ENCODE measurements at regions of chr10 and their contacts with region 1.

Region 1: DNA sequence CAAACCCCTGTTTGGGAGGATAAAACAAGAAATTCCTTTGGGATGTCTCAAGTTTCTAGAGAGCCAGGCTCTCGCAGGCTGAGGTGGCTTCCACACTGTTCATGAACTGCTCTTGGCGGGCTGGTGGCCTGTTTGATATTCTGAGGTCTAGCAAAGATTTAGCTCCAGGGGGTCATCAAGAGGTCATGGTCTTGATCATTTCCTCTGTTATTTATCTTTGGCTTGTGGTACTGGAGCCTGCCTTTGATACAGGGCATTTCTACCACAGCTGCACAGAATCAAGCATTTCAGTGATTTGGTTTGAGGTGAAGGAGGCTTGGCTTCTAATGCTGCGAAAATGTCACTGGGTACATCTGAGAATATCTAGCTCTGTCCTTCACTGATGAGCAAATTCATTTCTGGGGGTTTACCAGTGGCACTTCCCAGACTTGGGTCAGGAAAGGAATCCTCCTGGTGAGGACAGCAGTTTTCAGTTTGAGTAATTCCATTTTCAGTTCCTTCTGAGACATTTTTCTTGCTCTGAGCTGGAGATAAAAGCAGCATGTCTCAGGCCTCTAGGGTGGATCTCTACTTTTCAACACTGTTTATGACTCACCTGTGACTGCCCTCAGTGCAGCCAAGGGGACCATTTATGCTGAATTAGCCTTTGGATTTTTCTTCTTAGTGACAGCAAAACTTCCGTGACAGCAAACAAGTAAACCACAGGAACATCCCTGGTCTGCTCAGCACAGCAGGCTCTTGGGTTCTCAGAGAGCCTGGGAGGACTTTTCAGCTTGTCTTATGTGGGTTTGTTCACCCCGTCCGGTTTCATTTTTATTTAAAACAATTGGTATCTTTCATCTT is 312.0 kb downstream of the RNLS start:
- DNase-seq: peak; percentile 43
- H3K4me3 Mint-ChIP-seq: no peak overlapping the region
- H3K27ac Mint-ChIP-seq: peak overlapping the region; percentile 4
- H3K4me1 Mint-ChIP-seq: peaks cover 30% of the 10 kb centered on the region
- H3K27me3 Mint-ChIP-seq: peaks cover 3% of the 10 kb centered on the region

Region 2: GRCh38 chr10:87761892-87762291 is 509.2 kb before region 1 on chr10:
- CTCF ChIA-PET with region 1: no interaction called
- intact Hi-C with region 1: loop called (anchors 5 kb)
- DNase-seq: peak; percentile 77
- H3K4me3 Mint-ChIP-seq: no peak overlapping the region
- H3K27ac Mint-ChIP-seq: peak overlapping the region; percentile 86
- H3K4me1 Mint-ChIP-seq: peaks cover 37% of the 10 kb centered on the region
- H3K27me3 Mint-ChIP-seq: no peaks in the 10 kb centered on the region

Region 3: GRCh38 chr10:88052779-88053178 is 218.3 kb before region 1 on chr10:
- CTCF ChIA-PET with region 1: no interaction called
- intact Hi-C with region 1: no loop called
- DNase-seq: no peak
- H3K4me3 Mint-ChIP-seq: no peak overlapping the region
- H3K27ac Mint-ChIP-seq: no peak overlapping the region
- H3K4me1 Mint-ChIP-seq: no peaks in the 10 kb centered on the region
- H3K27me3 Mint-ChIP-seq: no peaks in the 10 kb centered on the region

Region 4: GRCh38 chr10:88064608-88065382 is 206.3 kb before region 1 on chr10:
- CTCF ChIA-PET with region 1: no interaction called
- intact Hi-C with region 1: loop called (anchors 1 kb)
- DNase-seq: peak; percentile 34
- H3K4me3 Mint-ChIP-seq: no peak overlapping the region
- H3K27ac Mint-ChIP-seq: no peak overlapping the region
- H3K4me1 Mint-ChIP-seq: peaks cover 68% of the 10 kb centered on the region
- H3K27me3 Mint-ChIP-seq: peaks cover 11% of the 10 kb centered on the region

Region 5: GRCh38 chr10:88138319-88138848 is 132.7 kb before region 1 on chr10:
- CTCF ChIA-PET with region 1: no interaction called
- intact Hi-C with region 1: loop called (anchors 1 kb)
- DNase-seq: no peak
- H3K4me3 Mint-ChIP-seq: no peak overlapping the region
- H3K27ac Mint-ChIP-seq: no peak overlapping the region
- H3K4me1 Mint-ChIP-seq: peaks cover 9% of the 10 kb centered on the region
- H3K27me3 Mint-ChIP-seq: no peaks in the 10 kb centered on the region

Region 6: DNA sequence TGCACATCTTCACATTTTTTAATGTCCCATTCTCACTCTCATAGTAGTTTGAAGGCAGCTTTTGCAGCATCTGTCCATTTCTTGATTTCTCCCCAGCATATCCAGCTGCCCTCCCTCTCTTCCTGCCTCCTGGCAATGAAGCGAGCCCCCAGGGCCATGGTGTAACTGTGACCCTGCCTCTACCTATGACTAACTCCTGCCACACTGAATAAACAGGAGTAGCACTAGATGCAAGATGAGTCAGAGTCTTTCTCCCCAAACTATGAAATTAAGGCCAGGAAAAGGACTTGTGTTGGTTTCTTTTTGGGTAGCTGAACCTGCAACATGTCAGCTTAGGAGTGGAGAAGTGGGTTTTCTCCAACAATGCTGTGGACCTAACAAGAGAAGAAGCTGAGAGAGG is 17.0 kb before region 1 on chr10:
- CTCF ChIA-PET with region 1: no interaction called
- intact Hi-C with region 1: loop called (anchors 1 kb)
- DNase-seq: peak; percentile 18
- H3K4me3 Mint-ChIP-seq: no peak overlapping the region
- H3K27ac Mint-ChIP-seq: no peak overlapping the region
- H3K4me1 Mint-ChIP-seq: peaks cover 4% of the 10 kb centered on the region
- H3K27me3 Mint-ChIP-seq: no peaks in the 10 kb centered on the region

Region 7: DNA sequence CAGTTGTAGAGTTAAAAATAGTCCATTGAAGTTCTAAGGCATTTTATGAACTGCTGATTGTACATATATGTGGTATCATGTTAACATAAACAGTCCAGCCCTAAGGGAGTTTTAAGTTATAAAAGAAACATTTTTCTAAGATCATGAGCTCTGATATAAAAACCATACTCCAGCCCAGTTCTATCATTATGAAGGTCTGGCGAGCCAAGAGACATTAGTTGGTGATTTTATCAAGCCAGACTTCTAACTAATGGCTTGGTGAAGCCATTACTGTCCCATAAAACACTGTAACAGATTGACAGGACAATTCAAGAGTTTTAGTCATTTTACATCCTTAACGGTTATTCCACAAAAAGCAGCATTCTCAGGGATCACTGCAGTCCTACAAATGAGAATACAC is 90.4 kb after region 1 on chr10:
- CTCF ChIA-PET with region 1: no interaction called
- intact Hi-C with region 1: no loop called
- DNase-seq: no peak
- H3K4me3 Mint-ChIP-seq: no peak overlapping the region
- H3K27ac Mint-ChIP-seq: no peak overlapping the region
- H3K4me1 Mint-ChIP-seq: no peaks in the 10 kb centered on the region
- H3K27me3 Mint-ChIP-seq: no peaks in the 10 kb centered on the region

Region 8: GRCh38 chr10:88409236-88409635 is 138.1 kb after region 1 on chr10:
- CTCF ChIA-PET with region 1: no interaction called
- intact Hi-C with region 1: loop called (anchors 5 kb)
- DNase-seq: no peak
- H3K4me3 Mint-ChIP-seq: no peak overlapping the region
- H3K27ac Mint-ChIP-seq: no peak overlapping the region
- H3K4me1 Mint-ChIP-seq: peaks cover 8% of the 10 kb centered on the region
- H3K27me3 Mint-ChIP-seq: no peaks in the 10 kb centered on the region

Region 9: GRCh38 chr10:88962336-88962735 is 691.2 kb after region 1 on chr10:
- CTCF ChIA-PET with region 1: no interaction called
- intact Hi-C with region 1: no loop called
- DNase-seq: no peak
- H3K4me3 Mint-ChIP-seq: no peak overlapping the region
- H3K27ac Mint-ChIP-seq: no peak overlapping the region
- H3K4me1 Mint-ChIP-seq: peaks cover 24% of the 10 kb centered on the region
- H3K27me3 Mint-ChIP-seq: no peaks in the 10 kb centered on the region

Measured in activated naive CD4-positive, alpha-beta T cell treated with anti-CD3 and anti-CD28 coated beads for 36 hours (primary cell).